Left colon (tissue), 2 donors: ENCODE measurements at regions of chr15 and their contacts with region 1.

Region 1: DNA sequence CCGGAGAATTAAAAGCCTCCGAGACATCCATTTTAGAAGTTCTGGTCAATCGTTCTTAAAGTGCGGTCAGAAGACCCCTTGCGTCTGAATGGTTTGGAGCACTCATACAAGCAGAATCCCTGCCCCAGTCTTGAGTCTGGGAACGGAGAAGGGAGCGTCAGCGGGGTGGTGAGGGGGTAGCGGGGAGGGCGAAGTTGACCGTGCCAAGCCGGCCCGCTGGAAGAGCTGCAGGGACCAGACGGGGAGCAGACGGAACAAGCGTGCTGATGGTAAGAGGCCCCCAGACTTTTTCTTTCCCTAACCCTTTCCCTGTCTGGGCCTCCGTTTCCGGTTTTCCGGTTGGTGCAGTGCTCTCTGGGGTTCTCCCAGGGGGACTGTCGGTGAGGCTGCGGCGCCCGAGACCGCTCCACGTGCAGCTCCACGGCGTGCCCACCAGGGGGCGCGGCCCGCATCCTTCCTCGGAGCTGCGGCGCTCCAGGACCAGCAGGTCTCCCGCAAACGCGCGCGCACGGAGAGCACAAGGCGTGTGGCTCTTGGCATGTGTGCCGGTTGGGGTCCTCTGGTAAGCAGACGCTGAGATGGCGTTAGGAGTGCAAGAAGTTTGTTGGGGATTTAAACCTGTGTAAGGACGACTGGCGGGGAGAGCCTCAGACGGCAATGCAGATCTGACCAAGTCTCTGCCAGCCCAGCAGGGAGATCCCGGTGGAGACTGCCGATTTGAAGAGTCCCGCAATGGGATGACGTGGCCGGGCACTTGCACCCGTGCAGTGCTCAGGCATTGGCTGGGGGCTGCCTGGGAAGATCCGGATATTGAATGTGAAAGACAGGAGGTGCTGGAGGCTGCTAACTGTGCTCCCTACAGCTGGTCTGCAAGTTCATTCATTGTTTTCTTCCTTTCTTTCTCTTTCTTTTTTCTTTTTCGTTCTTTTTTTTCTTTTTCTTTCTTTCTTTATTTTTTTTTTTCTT is 19.2 kb upstream of the CORO2B start:
- DNase-seq: peak; percentile 47 to 76
- ATAC-seq: peak; percentile 93

Region 2: GRCh38 chr15:68608206-68608843 is 48.7 kb after region 1 on chr15:
- intact Hi-C with region 1: no loop called
- DNase-seq: peak; percentile 20 to 57
- ATAC-seq: no peak

Region 3: GRCh38 chr15:68672781-68673205 is 113.2 kb after region 1 on chr15:
- intact Hi-C with region 1: loop called (anchors 5 kb)
- DNase-seq: no peak
- ATAC-seq: no peak

Region 4: DNA sequence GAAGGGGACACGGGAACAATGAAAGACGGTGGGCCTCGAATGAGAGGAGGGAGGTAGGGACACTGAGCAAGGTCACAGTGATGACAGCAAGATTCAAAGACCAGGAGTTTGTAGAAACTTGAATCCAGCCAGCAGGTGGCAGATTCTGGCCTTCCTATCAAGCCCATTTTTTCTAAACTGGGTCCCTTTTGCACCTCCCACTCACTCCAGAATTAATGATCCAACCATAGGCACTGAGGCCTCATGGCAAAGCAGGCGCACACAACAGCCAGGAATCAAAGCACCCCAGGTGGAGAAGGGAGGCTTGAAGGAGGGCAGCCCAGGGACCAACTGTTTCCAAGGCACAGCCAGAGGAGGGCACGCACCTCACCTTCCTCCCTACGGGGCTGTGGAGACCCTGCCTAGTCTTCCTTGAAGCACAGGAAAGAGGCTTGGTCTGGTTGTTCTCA is 170.9 kb after region 1 on chr15:
- intact Hi-C with region 1: no loop called
- DNase-seq: peak in 1 of 2 donors; percentile 46
- ATAC-seq: peak; percentile 64